CD8-positive, alpha-beta T cell (primary cell): ENCODE measurements at regions of chrX and their contacts with region 1.

Region 1: GRCh38 chrX:132226169-132226568 is 6.9 kb upstream of the RAP2C start:
- DNase-seq: peak in 2 of 9 experiments; percentile 6 to 19
- ATAC-seq: no peak
- H3K4me3 ChIP-seq: no peak overlapping the region
- H3K4me3 Mint-ChIP-seq: no peak overlapping the region
- H3K27ac ChIP-seq: no peak overlapping the region
- H3K27ac Mint-ChIP-seq: no peak overlapping the region
- H3K4me1 ChIP-seq: no peaks in the 10 kb centered on the region
- H3K4me1 Mint-ChIP-seq: peaks cover 8% of the 10 kb centered on the region
- H3K27me3 ChIP-seq: no peaks in the 10 kb centered on the region
- H3K27me3 Mint-ChIP-seq: no peaks in the 10 kb centered on the region
- CTCF ChIP-seq: no peak

Region 2: GRCh38 chrX:132188175-132188574 is 38.0 kb before region 1 on chrX:
- CTCF ChIA-PET with region 1: no interaction called
- POLR2A ChIA-PET with region 1: no interaction called
- intact Hi-C with region 1: no loop called
- DNase-seq: no peak
- ATAC-seq: no peak
- H3K4me3 ChIP-seq: no peak overlapping the region
- H3K4me3 Mint-ChIP-seq: no peak overlapping the region
- H3K27ac ChIP-seq: no peak overlapping the region
- H3K27ac Mint-ChIP-seq: no peak overlapping the region
- H3K4me1 ChIP-seq: no peaks in the 10 kb centered on the region
- H3K4me1 Mint-ChIP-seq: no peaks in the 10 kb centered on the region
- H3K27me3 ChIP-seq: no peaks in the 10 kb centered on the region
- H3K27me3 Mint-ChIP-seq: no peaks in the 10 kb centered on the region
- CTCF ChIP-seq: no peak

Region 3: DNA sequence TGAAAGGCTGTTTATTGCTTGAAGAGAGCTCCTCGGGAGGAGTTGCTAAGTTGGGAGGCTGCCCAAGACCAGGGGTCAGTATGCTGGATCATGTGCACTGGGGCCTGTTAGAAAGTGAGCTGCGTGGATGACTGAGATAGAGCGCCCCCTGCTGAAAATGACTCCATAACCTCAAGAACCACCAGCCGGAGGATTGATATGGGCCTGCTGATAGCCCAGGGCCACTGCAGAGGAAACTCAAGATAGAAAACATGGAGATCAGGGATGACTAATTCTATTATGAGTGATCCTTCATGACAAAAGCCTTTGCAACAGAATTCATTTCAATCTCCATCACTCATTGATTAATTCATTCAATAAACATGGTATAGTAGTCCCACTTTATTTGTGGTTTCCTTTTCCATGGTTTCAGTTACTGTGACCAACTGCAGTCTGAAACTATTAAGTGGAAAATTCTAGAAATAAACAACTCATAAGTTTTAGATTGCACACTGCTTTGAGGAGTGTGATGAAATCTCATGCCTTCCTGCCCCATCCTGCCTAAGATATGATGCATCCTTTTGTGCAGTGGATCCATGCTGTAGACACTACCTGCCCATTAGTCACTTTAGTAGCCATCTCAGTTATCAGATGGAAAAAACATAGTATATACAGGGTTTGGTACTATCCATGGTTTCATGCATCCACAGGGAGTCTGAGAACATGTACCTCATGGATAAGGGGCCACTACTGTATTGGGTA is 389.4 kb after region 1 on chrX:
- CTCF ChIA-PET with region 1: no interaction called
- POLR2A ChIA-PET with region 1: no interaction called
- intact Hi-C with region 1: loop called (anchors 2 kb)
- DNase-seq: peak in 8 of 9 experiments; percentile 21 to 64 (median 41)
- ATAC-seq: no peak
- H3K4me3 ChIP-seq: no peak overlapping the region
- H3K4me3 Mint-ChIP-seq: no peak overlapping the region
- H3K27ac ChIP-seq: no peak overlapping the region
- H3K27ac Mint-ChIP-seq: no peak overlapping the region
- H3K4me1 ChIP-seq: no peaks in the 10 kb centered on the region
- H3K4me1 Mint-ChIP-seq: no peaks in the 10 kb centered on the region
- H3K27me3 ChIP-seq: no peaks in the 10 kb centered on the region
- H3K27me3 Mint-ChIP-seq: no peaks in the 10 kb centered on the region
- CTCF ChIP-seq: peak; percentile 15

Region 4: DNA sequence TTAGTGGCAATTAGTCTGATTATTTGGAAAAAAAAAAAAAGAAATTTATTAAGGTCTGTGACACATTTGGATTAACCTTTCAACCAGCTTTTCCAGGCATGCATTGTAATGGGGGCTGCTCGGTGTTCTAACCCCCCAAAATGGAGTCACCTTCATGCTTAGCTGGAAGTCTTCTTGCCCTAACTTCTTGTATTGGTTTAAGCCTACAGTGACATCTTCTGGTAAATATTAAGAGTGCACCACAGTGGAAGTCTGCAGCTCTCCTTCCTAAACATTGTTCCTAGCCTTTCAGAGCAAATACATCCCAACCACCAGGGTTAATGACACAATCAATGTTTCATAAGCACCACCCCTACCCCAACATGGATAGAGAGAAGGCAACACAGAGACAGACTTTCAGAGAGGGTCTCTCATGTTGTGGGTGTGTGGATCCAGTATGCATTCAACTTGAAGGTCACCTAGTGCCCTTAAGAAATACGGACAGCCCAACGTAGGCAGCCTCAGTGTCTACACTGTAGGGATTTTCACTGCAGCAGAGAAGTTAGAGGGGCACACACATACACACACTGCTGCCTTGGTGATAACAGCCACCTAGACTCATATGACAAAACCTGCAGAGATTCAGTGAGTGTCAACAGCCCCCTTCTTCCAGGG is 405.5 kb after region 1 on chrX:
- CTCF ChIA-PET with region 1: interaction called, 4 read pairs
- POLR2A ChIA-PET with region 1: no interaction called
- intact Hi-C with region 1: loop called (anchors 1 to 5 kb)
- DNase-seq: peak in 2 of 9 experiments; percentile 40 to 56
- ATAC-seq: peak; percentile 48
- H3K4me3 ChIP-seq: no peak overlapping the region
- H3K4me3 Mint-ChIP-seq: no peak overlapping the region
- H3K27ac ChIP-seq: no peak overlapping the region
- H3K27ac Mint-ChIP-seq: no peak overlapping the region
- H3K4me1 ChIP-seq: no peaks in the 10 kb centered on the region
- H3K4me1 Mint-ChIP-seq: no peaks in the 10 kb centered on the region
- H3K27me3 ChIP-seq: no peaks in the 10 kb centered on the region
- H3K27me3 Mint-ChIP-seq: peaks cover 2% of the 10 kb centered on the region
- CTCF ChIP-seq: peak; percentile 28

Region 5: GRCh38 chrX:132732236-132732635 is 506.1 kb after region 1 on chrX:
- CTCF ChIA-PET with region 1: no interaction called
- POLR2A ChIA-PET with region 1: no interaction called
- intact Hi-C with region 1: no loop called
- DNase-seq: no peak
- ATAC-seq: no peak
- H3K4me3 ChIP-seq: no peak overlapping the region
- H3K4me3 Mint-ChIP-seq: no peak overlapping the region
- H3K27ac ChIP-seq: no peak overlapping the region
- H3K27ac Mint-ChIP-seq: no peak overlapping the region
- H3K4me1 ChIP-seq: peaks cover 3% of the 10 kb centered on the region
- H3K4me1 Mint-ChIP-seq: peaks cover 5% of the 10 kb centered on the region
- H3K27me3 ChIP-seq: no peaks in the 10 kb centered on the region
- H3K27me3 Mint-ChIP-seq: no peaks in the 10 kb centered on the region
- CTCF ChIP-seq: no peak